Activated CD4-positive, alpha-beta memory T cell treated with anti-CD3 and anti-CD28 coated beads for 36 hours (primary cell): ENCODE measurements at regions of chr1 and their contacts with region 1.

Region 1: DNA sequence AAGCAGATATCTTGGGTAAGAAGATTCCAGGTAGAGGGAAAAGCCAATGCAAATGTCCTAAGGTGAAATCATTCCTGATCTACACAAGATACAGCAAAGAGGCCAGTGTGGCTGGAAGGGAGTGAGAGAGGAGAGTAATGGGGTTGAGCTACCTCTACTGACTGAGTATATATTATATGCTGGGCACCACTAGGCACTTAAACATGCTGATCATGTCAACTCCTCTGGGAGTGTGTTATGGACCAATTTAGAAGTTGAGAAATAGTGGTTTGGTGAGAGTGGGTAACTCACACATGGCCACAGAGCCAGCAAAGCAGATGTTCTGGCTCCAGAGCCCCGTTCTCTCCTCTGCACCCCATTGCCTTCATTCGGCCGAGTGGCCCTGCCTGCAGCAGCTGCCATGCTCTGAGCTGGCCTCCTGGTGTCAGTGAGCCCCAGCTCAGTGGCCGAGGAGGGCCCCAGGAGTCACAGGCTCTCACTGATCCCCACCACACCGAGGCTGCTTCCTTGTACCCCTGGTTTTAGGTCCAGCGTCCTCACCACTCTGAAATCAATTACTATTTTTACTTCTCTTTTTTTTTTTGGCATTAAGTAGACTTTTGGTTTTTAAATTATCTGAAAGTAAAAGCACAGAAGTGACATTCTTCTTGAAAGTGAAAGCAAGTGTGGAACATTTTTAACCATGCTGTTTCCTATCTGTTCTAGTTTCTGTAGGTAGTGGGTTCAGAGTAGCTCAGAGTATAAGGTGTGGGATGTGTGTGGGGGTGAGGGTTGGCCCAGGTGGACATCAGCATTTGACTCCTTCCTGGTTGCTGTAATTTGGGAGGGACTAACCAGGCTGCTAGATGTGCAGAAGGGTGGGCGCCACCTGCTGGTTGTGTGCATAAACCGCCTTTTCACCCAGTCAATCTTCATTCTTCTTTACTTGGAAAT is 45.8 kb upstream of the CRNN start:
- DNase-seq: peak; percentile 83
- H3K4me3 Mint-ChIP-seq: peak overlapping the region; percentile 52
- H3K27ac Mint-ChIP-seq: peak overlapping the region; percentile 31
- H3K4me1 Mint-ChIP-seq: peaks cover 22% of the 10 kb centered on the region
- H3K27me3 Mint-ChIP-seq: no peaks in the 10 kb centered on the region

Region 2: GRCh38 chr1:152047730-152048402 is 412.0 kb before region 1 on chr1:
- CTCF ChIA-PET with region 1: interaction called, 59 read pairs
- POLR2A ChIA-PET with region 1: no interaction called
- intact Hi-C with region 1: loop called (anchors 1 kb)
- DNase-seq: peak; percentile 94
- H3K4me3 Mint-ChIP-seq: peak overlapping the region; percentile 72
- H3K27ac Mint-ChIP-seq: peak overlapping the region; percentile 99
- H3K4me1 Mint-ChIP-seq: peaks cover 29% of the 10 kb centered on the region
- H3K27me3 Mint-ChIP-seq: peaks cover 2% of the 10 kb centered on the region

Region 3: DNA sequence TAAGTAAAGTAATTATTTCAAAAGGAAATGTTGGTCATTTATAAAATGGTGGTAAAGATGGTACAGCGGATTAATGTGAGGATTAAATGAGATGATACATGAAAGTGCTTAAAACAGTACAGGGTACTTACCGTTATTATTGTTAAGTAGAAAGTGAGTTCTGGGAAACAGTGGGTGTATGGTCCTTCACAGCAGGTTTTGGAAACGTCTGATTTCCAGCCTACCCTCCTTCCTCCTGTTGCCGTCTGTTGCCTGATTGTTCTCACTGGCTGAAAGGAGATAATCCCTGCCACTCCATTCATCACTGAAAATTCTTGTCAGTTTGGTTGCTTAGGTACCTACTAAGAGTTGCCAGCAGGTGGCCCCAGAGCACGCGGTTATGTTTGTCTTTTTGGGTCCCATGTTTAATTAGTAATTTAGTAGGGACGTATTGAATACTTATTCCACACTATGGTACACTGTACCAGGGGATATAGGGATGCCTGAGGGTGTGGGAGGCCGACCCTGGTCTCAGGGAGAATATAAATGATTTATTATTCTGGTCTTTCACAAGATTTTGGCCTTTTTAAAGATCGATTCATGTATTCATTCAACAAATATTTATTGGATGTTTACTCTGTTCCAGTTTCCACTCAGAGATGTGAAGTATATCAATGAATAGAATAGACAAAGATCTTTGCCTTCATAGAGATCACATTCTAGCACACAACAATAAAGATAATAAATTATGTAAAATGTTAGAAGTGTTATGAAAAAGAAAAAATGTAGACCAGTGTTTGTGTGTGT is 270.0 kb before region 1 on chr1:
- CTCF ChIA-PET with region 1: interaction called, 253 read pairs
- POLR2A ChIA-PET with region 1: interaction called, 4 read pairs
- intact Hi-C with region 1: loop called (anchors 1 kb)
- DNase-seq: peak; percentile 80
- H3K4me3 Mint-ChIP-seq: peak overlapping the region; percentile 68
- H3K27ac Mint-ChIP-seq: no peak overlapping the region
- H3K4me1 Mint-ChIP-seq: peaks cover 8% of the 10 kb centered on the region
- H3K27me3 Mint-ChIP-seq: peaks cover 2% of the 10 kb centered on the region

Region 4: GRCh38 chr1:152398812-152399698 is 60.8 kb before region 1 on chr1:
- CTCF ChIA-PET with region 1: interaction called, 44 read pairs
- POLR2A ChIA-PET with region 1: no interaction called
- intact Hi-C with region 1: loop called (anchors 10 kb)
- DNase-seq: peak; percentile 11
- H3K4me3 Mint-ChIP-seq: no peak overlapping the region
- H3K27ac Mint-ChIP-seq: no peak overlapping the region
- H3K4me1 Mint-ChIP-seq: peaks cover 18% of the 10 kb centered on the region
- H3K27me3 Mint-ChIP-seq: peaks cover 3% of the 10 kb centered on the region

Region 5: DNA sequence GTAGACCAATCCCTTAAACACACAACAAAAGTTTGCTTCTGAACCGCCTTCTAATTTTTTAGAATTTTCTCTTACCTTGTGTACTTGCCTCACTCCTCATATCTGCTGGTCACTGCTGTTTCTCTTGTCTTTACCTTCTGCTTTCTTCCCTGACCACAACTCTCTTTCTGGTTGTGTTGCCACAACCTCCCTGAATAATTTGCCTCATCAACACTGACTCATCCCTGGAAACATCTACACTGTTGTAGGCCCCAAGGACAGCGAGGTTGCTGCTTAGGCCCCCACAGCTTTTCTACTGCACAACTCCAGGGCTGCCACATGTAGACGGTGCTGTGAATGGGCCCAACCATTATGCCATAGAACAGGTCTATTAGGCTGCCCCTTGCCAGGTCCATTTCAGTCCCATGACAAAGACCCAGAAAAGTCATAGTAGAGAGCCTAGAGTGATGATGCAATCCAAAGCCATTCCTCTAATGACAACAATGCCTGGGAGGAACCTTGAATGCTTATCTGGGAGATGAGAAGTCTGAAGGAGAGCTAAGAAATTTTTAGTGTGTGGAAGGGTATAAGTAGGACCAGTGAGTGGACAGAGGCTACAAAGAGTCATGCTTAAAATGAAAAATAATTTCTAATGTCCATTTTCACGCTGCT is 14.2 kb after region 1 on chr1:
- CTCF ChIA-PET with region 1: interaction called, 33 read pairs
- POLR2A ChIA-PET with region 1: no interaction called
- intact Hi-C with region 1: no loop called
- DNase-seq: no peak
- H3K4me3 Mint-ChIP-seq: no peak overlapping the region
- H3K27ac Mint-ChIP-seq: no peak overlapping the region
- H3K4me1 Mint-ChIP-seq: no peaks in the 10 kb centered on the region
- H3K27me3 Mint-ChIP-seq: peaks cover 5% of the 10 kb centered on the region

Region 6: DNA sequence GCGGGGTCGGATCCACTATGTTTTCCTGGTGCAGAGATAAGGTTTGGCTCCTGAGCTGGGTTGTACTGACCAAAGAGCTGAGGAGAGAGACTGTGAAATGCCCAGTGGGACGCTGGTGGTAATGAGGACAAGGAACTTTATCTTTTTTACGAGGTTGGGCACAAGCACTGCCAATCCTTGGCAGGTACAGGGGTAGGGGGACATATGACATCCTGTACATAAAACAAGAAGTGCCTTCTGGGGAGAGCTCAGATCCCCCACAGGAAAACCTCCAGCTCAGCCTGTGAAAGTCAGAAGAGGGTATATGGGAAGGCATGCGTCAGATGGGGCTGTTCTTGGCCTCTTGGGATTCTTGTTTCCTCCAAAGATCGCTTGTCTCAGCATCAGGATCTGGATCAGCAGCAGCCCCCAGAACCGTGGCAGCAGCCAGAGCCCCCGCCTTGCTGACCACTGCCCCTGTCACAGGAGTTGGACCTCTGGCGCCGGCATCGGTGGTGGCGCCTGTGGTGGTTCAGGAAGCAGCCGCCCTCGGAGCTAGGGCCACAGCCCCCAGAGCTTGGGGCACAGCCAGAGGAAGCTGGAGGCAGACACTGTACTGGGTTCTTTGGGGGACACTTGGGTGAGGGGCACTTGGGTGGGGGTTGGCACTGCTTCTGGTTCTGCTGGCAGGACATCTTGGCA is 105.8 kb after region 1 on chr1:
- CTCF ChIA-PET with region 1: no interaction called
- POLR2A ChIA-PET with region 1: no interaction called
- intact Hi-C with region 1: no loop called
- DNase-seq: no peak
- H3K4me3 Mint-ChIP-seq: no peak overlapping the region
- H3K27ac Mint-ChIP-seq: no peak overlapping the region
- H3K4me1 Mint-ChIP-seq: no peaks in the 10 kb centered on the region
- H3K27me3 Mint-ChIP-seq: peaks cover under 1% of the 10 kb centered on the region